ENCODE measurements at regions of chr1 and their contacts with region 1.

Region 1: GRCh38 chr1:179706339-179706941 is 36.7 kb upstream of the FAM163A start:
- DNase-seq: no peak
- ATAC-seq: no peak
- H3K4me3 ChIP-seq: no peak overlapping the region
- H3K27ac ChIP-seq: no peak overlapping the region
- H3K4me1 ChIP-seq: no peaks in the 10 kb centered on the region
- H3K27me3 ChIP-seq: peaks cover 9% of the 10 kb centered on the region; the same call in 1 of the 2 replicates
- CTCF ChIP-seq: peak; percentile 84

Region 2: GRCh38 chr1:180178511-180179161 is 472.2 kb after region 1 on chr1:
- CTCF ChIA-PET with region 1: interaction called, 6 read pairs
- POLR2A ChIA-PET with region 1: no interaction called
- in situ Hi-C with region 1: no loop called
- intact Hi-C with region 1: loop called (anchors 5 kb)
- DNase-seq: peak; percentile 60
- ATAC-seq: peak; percentile 74
- H3K4me3 ChIP-seq: no peak overlapping the region
- H3K27ac ChIP-seq: no peak overlapping the region
- H3K4me1 ChIP-seq: no peaks in the 10 kb centered on the region
- H3K27me3 ChIP-seq: no peaks in the 10 kb centered on the region
- CTCF ChIP-seq: peak; percentile 98

Measured in Panc1 (cell line).